Activated CD4-positive, alpha-beta T cell treated with anti-CD3 and anti-CD28 coated beads, Interleukin-2, amount 10 ng/mL, durations not matched to agents 24 days and 14 days (primary cell): ENCODE measurements at regions of chr3 and their contacts with region 1.

Region 1: DNA sequence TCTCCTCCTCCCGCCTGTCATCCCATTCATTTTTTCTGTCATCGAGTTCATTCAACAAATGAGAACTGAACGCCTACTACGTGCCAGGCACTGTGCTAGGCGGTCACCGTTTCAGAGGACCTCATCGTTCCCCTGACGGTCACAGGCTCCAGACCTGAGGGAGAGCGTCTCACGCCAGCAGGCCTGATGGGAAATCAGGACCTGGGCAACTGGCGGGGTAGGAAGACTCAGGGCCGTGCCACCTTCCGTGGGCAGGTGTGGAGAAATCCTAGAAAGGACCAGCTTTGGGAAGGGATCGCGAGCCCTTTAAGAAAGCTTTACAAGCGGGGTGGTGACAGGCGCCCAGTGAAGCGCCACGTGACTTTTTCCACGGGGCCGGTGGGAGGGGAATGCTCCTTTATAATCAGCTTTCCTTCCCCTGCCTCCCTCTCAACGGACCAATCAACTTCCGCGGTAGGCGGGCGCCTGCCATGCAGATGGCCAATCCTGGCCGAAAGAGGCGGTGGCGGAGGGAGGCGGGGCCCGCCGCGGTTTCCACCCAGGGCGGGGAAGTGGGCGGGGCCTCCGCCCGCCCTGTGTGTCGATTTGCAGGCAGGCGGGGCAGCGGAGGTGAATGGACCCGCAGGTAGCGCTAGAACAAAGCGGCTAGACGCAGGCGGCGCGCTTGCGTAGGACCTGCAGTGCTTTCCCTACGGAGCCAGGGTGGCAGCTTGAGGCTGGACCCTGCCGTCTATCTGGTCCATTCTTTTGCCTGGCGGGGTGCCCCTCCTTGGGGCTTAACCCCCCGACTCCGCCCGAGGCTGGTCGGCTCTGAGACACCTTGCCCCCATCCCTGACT is 816 bp upstream of the DUSP7 start:
- DNase-seq: peak; percentile 100
- H3K4me3 Mint-ChIP-seq: peak overlapping the region; percentile 89
- H3K27ac Mint-ChIP-seq: peak overlapping the region; percentile 95
- H3K4me1 Mint-ChIP-seq: peaks cover 34% of the 10 kb centered on the region
- H3K27me3 Mint-ChIP-seq: no peaks in the 10 kb centered on the region

Region 2: GRCh38 chr3:51498876-51499738 is 558.1 kb before region 1 on chr3:
- intact Hi-C with region 1: loop called (anchors 5 kb)
- DNase-seq: peak; percentile 97
- H3K4me3 Mint-ChIP-seq: peak overlapping the region; percentile 93
- H3K27ac Mint-ChIP-seq: peak overlapping the region; percentile 97
- H3K4me1 Mint-ChIP-seq: peaks cover 17% of the 10 kb centered on the region
- H3K27me3 Mint-ChIP-seq: peaks cover 2% of the 10 kb centered on the region

Region 3: GRCh38 chr3:51941798-51942602 is 115.2 kb before region 1 on chr3 and contains the starts of genes PARP3 and RRP9:
- intact Hi-C with region 1: loop called (anchors 1 kb)
- DNase-seq: peak; percentile 100
- H3K4me3 Mint-ChIP-seq: peak within 1 kb of the TSS; percentile 85
- H3K27ac Mint-ChIP-seq: peak within 1 kb of the TSS; percentile 91
- H3K4me1 Mint-ChIP-seq: peaks cover 26% of the 10 kb centered on the region
- H3K27me3 Mint-ChIP-seq: no peaks in the 10 kb centered on the region
- total RNA-seq, gene PARP3: 17.0 and 17.5 TPM in 2 replicates
- total RNA-seq, gene RRP9: 92.3 and 95.5 TPM in 2 replicates

Region 4: GRCh38 chr3:52001443-52001974 is 55.7 kb before region 1 on chr3:
- intact Hi-C with region 1: loop called (anchors 2 kb)
- DNase-seq: peak; percentile 96
- H3K4me3 Mint-ChIP-seq: no peak overlapping the region
- H3K27ac Mint-ChIP-seq: no peak overlapping the region
- H3K4me1 Mint-ChIP-seq: peaks cover 16% of the 10 kb centered on the region
- H3K27me3 Mint-ChIP-seq: peaks cover 16% of the 10 kb centered on the region

Region 5: DNA sequence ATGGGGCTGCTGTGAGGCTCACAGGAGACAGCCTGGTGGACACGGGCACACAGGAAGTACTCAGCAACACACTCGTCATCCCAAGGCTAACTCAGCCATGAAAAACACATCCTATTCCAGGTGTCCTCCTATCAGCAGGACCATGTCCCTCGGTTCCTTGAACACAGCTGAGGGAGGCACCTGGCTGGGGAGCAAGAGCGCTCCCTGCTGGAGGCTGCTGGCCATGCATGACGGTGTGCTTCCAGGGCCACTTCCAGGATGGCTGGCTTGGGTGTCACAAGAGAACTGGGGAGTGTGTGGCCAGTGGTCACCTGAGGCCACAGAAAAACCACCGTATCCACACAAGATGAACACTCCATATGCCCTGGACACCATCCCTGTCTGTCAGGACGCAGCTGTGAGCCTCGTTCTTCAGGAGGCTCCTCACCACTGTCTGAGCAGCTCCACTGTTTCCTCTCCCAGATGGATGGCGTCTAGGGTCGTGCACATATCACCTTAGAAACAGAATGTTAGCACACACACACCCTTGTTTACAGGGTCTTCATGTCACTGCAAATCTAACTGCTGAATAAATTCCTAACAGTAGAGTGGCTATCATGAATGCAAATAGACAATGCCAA is 66.0 kb after region 1 on chr3:
- intact Hi-C with region 1: loop called (anchors 2 kb)
- DNase-seq: peak; percentile 94
- H3K4me3 Mint-ChIP-seq: no peak overlapping the region
- H3K27ac Mint-ChIP-seq: no peak overlapping the region
- H3K4me1 Mint-ChIP-seq: peaks cover 27% of the 10 kb centered on the region
- H3K27me3 Mint-ChIP-seq: no peaks in the 10 kb centered on the region

Region 6: DNA sequence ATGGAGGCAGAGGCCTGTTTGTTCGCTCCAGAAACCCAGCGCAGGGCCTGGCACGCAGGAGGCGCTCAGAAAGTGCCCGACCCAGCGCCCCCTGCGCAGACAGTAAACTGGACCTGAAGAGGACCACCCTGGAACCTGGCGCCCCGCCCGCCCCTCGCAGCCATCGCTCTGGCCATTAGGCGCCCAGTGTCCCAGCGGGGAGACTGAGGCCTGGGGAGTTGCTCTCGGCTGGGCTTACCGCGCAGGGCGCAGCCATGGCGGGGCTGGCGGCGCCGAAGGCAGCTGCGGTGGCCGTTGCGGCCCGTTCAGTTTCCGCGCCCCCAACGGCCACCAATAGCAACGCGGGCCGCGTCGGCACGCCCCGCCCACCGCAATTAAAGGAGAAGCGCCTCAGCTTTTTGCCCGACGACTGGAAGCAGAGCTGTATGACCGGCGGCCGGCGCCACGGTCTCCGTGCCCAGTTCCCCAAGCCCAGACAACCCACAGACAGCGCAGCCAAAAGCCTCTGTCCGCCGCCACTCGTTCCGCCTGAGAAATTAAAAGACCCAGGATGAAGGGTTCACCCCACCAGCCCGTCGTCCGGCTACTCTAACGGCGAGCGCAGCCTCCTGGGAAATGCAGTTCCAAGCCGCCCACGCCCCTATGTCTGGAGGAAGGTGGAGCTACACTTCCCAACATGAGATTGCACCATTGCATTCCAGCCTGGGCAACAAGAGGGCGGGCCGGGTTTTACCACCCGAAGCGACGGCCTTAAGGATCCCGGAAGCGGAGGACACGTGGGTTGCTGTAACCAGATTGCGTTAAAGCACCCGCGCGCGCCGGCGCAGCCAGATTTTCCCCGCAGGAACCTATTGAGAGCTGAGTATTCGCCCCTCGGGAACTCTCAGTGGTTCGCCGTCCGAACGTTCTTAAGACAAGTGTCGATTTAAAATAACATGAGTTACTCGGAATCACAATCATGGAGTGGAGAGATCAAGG is 97.2 kb after region 1 on chr3 and contains the start of gene POC1A:
- intact Hi-C with region 1: loop called (anchors 1 kb)
- DNase-seq: peak; percentile 97
- H3K4me3 Mint-ChIP-seq: peak within 1 kb of the TSS; percentile 92
- H3K27ac Mint-ChIP-seq: peak within 1 kb of the TSS; percentile 97
- H3K4me1 Mint-ChIP-seq: peaks cover 20% of the 10 kb centered on the region
- H3K27me3 Mint-ChIP-seq: no peaks in the 10 kb centered on the region
- total RNA-seq, gene POC1A: 23.2 and 24.1 TPM in 2 replicates

Region 7: GRCh38 chr3:52278510-52279069 is 221.4 kb after region 1 on chr3 and contains the start of gene WDR82:
- intact Hi-C with region 1: loop called (anchors 5 kb)
- DNase-seq: peak; percentile 99
- H3K4me3 Mint-ChIP-seq: peak within 1 kb of the TSS; percentile 96
- H3K27ac Mint-ChIP-seq: peak within 1 kb of the TSS; percentile 96
- H3K4me1 Mint-ChIP-seq: peaks cover 64% of the 10 kb centered on the region
- H3K27me3 Mint-ChIP-seq: no peaks in the 10 kb centered on the region
- total RNA-seq, gene WDR82: 104 and 106 TPM in 2 replicates